Lower leg skin (tissue), 4 donors: ENCODE measurements at regions of chr2 and their contacts with region 1.

Region 1: DNA sequence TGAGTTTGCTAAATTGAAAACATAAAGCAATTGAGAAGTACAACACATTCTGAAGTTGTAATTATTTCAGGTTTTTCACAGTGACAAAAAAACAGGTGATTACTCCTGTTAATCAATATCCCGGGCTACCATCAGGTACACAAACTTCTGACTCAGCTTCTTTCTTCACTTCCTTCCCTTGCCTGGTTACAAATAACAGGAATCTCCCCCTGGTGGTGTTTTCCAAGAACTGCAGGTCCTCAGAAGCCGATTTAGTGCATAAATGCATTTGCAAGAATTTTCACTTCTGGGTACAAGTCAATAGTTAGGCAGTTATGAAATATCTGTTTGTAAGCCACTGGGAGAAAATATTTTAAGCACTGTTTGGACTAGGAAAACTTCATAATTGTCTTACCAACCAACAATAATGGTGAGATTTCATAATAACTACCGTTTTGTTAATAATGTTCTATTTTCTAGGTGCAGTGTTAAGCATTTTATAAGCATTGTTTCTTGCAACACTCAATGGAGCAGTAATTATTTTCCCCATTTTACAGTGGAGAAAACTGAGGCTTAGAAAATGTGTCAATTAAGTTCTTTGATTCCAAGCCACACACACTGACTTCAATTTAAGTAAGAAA is 12.4 kb upstream of the GMCL1 start:
- DNase-seq: peak; percentile 92
- H3K4me3 ChIP-seq: no peak overlapping the region
- CTCF ChIP-seq: peak in 1 of 3 donors; percentile 96
- POLR2A ChIP-seq: no peak

Region 2: DNA sequence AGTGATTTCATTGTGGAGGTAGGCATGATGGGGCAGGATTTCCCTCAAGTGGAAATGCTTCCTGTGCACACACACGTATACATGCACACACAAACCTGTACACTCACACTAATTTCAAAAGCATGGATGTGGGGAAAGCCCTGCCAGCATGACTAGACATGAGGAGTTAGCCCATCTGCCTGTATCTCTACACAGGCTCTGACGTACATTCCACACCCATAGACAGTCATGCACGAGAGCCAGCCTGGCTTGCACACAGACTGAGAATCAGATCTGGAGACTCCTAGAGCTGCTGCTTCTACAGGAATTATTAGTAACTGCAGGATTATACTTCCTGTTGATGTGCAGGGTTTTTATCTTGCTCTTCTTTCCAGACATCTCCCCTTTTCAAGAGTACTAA is 352.5 kb before region 1 on chr2:
- intact Hi-C with region 1: no loop called
- DNase-seq: peak; percentile 73 to 88
- H3K4me3 ChIP-seq: no peak overlapping the region
- CTCF ChIP-seq: no peak
- POLR2A ChIP-seq: no peak

Region 3: GRCh38 chr2:69741619-69742466 is 75.2 kb before region 1 on chr2 and contains the start of gene ANXA4:
- intact Hi-C with region 1: loop called (anchors 5 kb)
- DNase-seq: peak; percentile 91 to 97
- H3K4me3 ChIP-seq: peak within 1 kb of the TSS; percentile 52
- CTCF ChIP-seq: no peak
- POLR2A ChIP-seq: no peak
- total RNA-seq, gene ANXA4: 60.2 to 107 (median 64.9) TPM